Mammary epithelial cell (primary cell): ENCODE measurements at regions of chr4 and their contacts with region 1.

Region 1: DNA sequence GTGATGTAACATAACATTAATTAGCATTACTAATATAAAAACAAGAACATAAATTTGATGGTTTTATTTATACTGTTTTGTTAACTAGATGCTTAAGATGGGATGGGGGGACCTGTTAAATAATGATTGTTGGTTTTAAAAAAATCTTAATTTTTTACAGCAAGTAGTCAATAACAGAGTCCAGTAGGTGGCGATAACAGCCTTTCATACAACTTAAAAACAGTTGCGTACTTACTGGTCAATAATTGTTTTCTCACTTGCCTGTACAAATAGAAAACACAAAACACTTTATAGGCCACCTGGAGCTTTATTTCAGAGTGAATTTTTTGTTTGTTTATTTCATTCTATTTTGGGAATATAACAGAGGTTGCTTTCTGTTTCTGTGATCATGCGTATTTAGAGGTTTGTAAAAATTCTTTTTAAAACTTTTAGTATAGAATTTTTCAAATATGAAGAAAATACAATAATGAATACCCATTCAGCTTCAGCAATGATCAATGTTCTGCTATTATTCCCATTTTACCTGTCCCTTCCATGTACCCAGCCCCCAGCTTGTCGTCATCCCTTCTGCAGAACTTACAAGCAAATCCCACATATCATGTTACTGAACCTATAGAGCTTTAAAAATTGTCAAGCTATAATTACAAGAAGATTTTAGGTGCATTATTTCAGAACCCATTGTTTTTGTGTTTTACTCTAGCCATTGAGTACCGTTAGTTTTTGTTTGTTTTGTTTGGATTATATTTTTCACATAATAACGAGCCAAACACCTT is 97.1 kb downstream of the MRPL1 start:
- DNase-seq: peak; percentile 25
- H3K4me3 ChIP-seq: no peak overlapping the region
- H3K27ac ChIP-seq: no peak overlapping the region
- H3K4me1 ChIP-seq: no peaks in the 10 kb centered on the region
- H3K27me3 ChIP-seq: no peaks in the 10 kb centered on the region
- CTCF ChIP-seq: peak; percentile 50 to 58

Region 2: GRCh38 chr4:77877190-77877589 is 82.6 kb before region 1 on chr4:
- CTCF ChIA-PET with region 1: no interaction called
- dilution Hi-C with region 1: no loop called
- in situ Hi-C with region 1: no loop called
- intact Hi-C with region 1: no loop called
- DNase-seq: no peak
- H3K4me3 ChIP-seq: no peak overlapping the region
- H3K27ac ChIP-seq: no peak overlapping the region
- H3K4me1 ChIP-seq: peaks cover 23% of the 10 kb centered on the region
- H3K27me3 ChIP-seq: no peaks in the 10 kb centered on the region
- CTCF ChIP-seq: no peak

Region 3: GRCh38 chr4:78864405-78865024 is 904.8 kb after region 1 on chr4:
- CTCF ChIA-PET with region 1: no interaction called
- dilution Hi-C with region 1: no loop called
- in situ Hi-C with region 1: loop called (anchors 25 kb)
- intact Hi-C with region 1: loop called (anchors 2 kb)
- DNase-seq: peak; percentile 58
- H3K4me3 ChIP-seq: no peak overlapping the region
- H3K27ac ChIP-seq: no peak overlapping the region
- H3K4me1 ChIP-seq: no peaks in the 10 kb centered on the region
- H3K27me3 ChIP-seq: no peaks in the 10 kb centered on the region
- CTCF ChIP-seq: peak; percentile 73